ENCODE measurements at regions of chr2 and their contacts with region 1.

Region 1: GRCh38 chr2:227106845-227107759 is 56.9 kb downstream of the COL4A4 start:
- DNase-seq: peak in 11 of 14 experiments; percentile 4 to 51 (median 19)
- ATAC-seq: no peak
- H3K4me3 ChIP-seq: no peak overlapping the region
- H3K4me3 Mint-ChIP-seq: no peak overlapping the region
- H3K27ac ChIP-seq: no peak overlapping the region
- H3K27ac Mint-ChIP-seq: no peak overlapping the region
- H3K4me1 ChIP-seq: no peaks in the 10 kb centered on the region
- H3K4me1 Mint-ChIP-seq: no peaks in the 10 kb centered on the region
- H3K27me3 ChIP-seq: no peaks in the 10 kb centered on the region
- H3K27me3 Mint-ChIP-seq: peaks cover 18% of the 10 kb centered on the region
- CTCF ChIP-seq: peak; percentile 38

Region 2: DNA sequence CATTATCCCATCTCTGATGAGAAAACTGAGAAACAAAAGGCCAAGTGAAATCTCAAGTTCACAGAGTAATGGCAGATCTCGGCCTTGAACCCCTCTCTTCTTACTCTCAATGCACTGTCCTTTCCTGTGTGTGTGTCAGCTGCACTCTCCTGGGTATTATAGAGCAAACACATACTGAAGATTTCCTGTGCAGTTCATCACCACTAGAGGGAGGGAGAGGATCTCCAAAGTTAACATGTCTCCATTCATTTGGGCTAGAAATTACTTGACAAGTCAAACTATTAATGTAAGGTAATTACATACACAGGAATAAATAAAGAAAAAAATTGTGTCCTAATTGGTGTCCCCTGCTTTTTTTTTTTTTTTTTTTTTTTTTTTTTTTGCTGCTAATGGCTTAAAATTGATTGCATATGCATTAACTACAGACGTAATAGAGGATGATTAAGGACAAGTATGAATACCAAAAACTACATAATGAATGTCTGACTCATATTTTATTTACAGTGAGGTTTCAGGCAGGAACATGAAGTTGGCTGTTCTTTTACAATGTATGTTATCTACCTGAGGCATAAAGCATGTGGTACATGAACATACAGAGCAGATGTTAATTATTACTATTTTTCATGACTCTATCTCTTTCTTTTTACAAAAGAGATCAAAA is 1438.4 kb before region 1 on chr2:
- CTCF ChIA-PET with region 1: no interaction called
- POLR2A ChIA-PET with region 1: no interaction called
- intact Hi-C with region 1: loop called (anchors 2 to 5 kb)
- DNase-seq: peak in 5 of 14 experiments; percentile 3 to 68 (median 51)
- ATAC-seq: peak; percentile 81
- H3K4me3 ChIP-seq: no peak overlapping the region
- H3K4me3 Mint-ChIP-seq: no peak overlapping the region
- H3K27ac ChIP-seq: no peak overlapping the region
- H3K27ac Mint-ChIP-seq: no peak overlapping the region
- H3K4me1 ChIP-seq: no peaks in the 10 kb centered on the region
- H3K4me1 Mint-ChIP-seq: no peaks in the 10 kb centered on the region
- H3K27me3 ChIP-seq: no peaks in the 10 kb centered on the region
- H3K27me3 Mint-ChIP-seq: peaks cover 16% of the 10 kb centered on the region
- CTCF ChIP-seq: peak; percentile 71

Region 3: GRCh38 chr2:227082286-227082685 is 24.8 kb before region 1 on chr2:
- CTCF ChIA-PET with region 1: no interaction called
- POLR2A ChIA-PET with region 1: no interaction called
- intact Hi-C with region 1: no loop called
- DNase-seq: no peak
- ATAC-seq: no peak
- H3K4me3 ChIP-seq: no peak overlapping the region
- H3K4me3 Mint-ChIP-seq: no peak overlapping the region
- H3K27ac ChIP-seq: no peak overlapping the region
- H3K27ac Mint-ChIP-seq: no peak overlapping the region
- H3K4me1 ChIP-seq: no peaks in the 10 kb centered on the region
- H3K4me1 Mint-ChIP-seq: no peaks in the 10 kb centered on the region
- H3K27me3 ChIP-seq: peaks cover 0 to 3% of the 10 kb centered on the region in 2 experiments
- H3K27me3 Mint-ChIP-seq: peaks cover 30% of the 10 kb centered on the region
- CTCF ChIP-seq: no peak

Region 4: DNA sequence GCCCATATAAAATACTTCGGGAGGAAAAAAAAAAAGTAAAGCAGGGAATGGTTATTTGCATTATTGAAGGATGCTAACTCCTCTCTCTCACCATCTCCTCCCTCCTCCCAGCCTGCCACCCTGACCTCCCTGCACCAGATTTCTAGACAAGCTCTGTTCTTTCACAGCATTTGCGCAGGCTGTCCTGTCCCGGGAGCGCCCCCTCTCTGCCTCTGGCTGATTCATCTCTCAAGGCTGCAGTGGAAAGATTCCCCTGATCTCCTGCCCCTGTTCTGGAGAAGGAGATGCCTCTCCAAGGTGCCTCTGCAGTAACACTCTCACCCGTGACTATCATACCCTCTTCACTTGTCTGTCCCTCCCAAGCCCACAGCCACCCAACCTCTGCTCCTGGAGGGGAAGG is 18.4 kb after region 1 on chr2:
- CTCF ChIA-PET with region 1: no interaction called
- POLR2A ChIA-PET with region 1: no interaction called
- intact Hi-C with region 1: no loop called
- DNase-seq: no peak
- ATAC-seq: no peak
- H3K4me3 ChIP-seq: no peak overlapping the region
- H3K4me3 Mint-ChIP-seq: no peak overlapping the region
- H3K27ac ChIP-seq: no peak overlapping the region
- H3K27ac Mint-ChIP-seq: no peak overlapping the region
- H3K4me1 ChIP-seq: no peaks in the 10 kb centered on the region
- H3K4me1 Mint-ChIP-seq: no peaks in the 10 kb centered on the region
- H3K27me3 ChIP-seq: no peaks in the 10 kb centered on the region
- H3K27me3 Mint-ChIP-seq: peaks cover 24% of the 10 kb centered on the region
- CTCF ChIP-seq: no peak